ENCODE measurements at regions of chr7 and their contacts with region 1.

Region 1: GRCh38 chr7:140425718-140426117 is 21.9 kb downstream of the RAB19 start:
- DNase-seq: no peak
- H3K4me3 ChIP-seq: no peak overlapping the region
- H3K27ac ChIP-seq: no peak overlapping the region
- H3K4me1 ChIP-seq: no peaks in the 10 kb centered on the region
- H3K27me3 ChIP-seq: no peaks in the 10 kb centered on the region
- CTCF ChIP-seq: no peak
- POLR2A ChIP-seq: no peak

Region 2: DNA sequence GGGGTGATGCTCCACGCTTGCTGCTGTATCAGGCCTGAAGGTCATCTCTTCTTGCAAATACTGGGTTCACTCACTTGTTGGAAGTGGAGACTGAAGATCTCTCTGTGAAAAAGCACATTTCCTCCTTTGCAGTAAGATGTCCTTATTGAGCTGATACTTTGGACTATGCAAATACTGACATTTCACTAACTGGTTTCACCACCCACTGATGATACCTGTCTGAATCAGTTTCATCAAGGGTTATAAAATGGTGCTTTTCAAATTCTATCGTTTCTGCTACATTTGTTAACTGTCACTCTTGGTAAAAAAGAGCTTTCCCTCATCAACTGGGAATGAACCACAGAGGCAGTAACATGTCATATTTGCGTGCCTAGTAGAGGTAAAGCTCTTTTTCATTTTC is 13.6 kb after region 1 on chr7:
- intact Hi-C with region 1: no loop called
- DNase-seq: no peak
- H3K4me3 ChIP-seq: no peak overlapping the region
- H3K27ac ChIP-seq: no peak overlapping the region
- H3K4me1 ChIP-seq: no peaks in the 10 kb centered on the region
- H3K27me3 ChIP-seq: no peaks in the 10 kb centered on the region
- CTCF ChIP-seq: no peak
- POLR2A ChIP-seq: no peak

Region 3: GRCh38 chr7:141115965-141116364 is 690.2 kb after region 1 on chr7:
- intact Hi-C with region 1: no loop called
- DNase-seq: no peak
- H3K4me3 ChIP-seq: no peak overlapping the region
- H3K27ac ChIP-seq: no peak overlapping the region
- H3K4me1 ChIP-seq: no peaks in the 10 kb centered on the region
- H3K27me3 ChIP-seq: no peaks in the 10 kb centered on the region
- CTCF ChIP-seq: no peak
- POLR2A ChIP-seq: no peak

Region 4: GRCh38 chr7:141251957-141252356 is 826.2 kb after region 1 on chr7:
- intact Hi-C with region 1: no loop called
- DNase-seq: no peak
- H3K4me3 ChIP-seq: no peak overlapping the region
- H3K27ac ChIP-seq: no peak overlapping the region
- H3K4me1 ChIP-seq: no peaks in the 10 kb centered on the region
- H3K27me3 ChIP-seq: no peaks in the 10 kb centered on the region
- CTCF ChIP-seq: no peak
- POLR2A ChIP-seq: no peak

Region 5: GRCh38 chr7:141452911-141453310 is 1027.2 kb after region 1 on chr7:
- intact Hi-C with region 1: loop called (anchors 5 kb)
- DNase-seq: no peak
- H3K4me3 ChIP-seq: no peak overlapping the region
- H3K27ac ChIP-seq: no peak overlapping the region
- H3K4me1 ChIP-seq: no peaks in the 10 kb centered on the region
- H3K27me3 ChIP-seq: no peaks in the 10 kb centered on the region
- CTCF ChIP-seq: no peak
- POLR2A ChIP-seq: no peak

Measured in breast epithelium (tissue), 4 donors.